GM12878 (cell line): ENCODE measurements at regions of chrX and their contacts with region 1.

Region 1: DNA sequence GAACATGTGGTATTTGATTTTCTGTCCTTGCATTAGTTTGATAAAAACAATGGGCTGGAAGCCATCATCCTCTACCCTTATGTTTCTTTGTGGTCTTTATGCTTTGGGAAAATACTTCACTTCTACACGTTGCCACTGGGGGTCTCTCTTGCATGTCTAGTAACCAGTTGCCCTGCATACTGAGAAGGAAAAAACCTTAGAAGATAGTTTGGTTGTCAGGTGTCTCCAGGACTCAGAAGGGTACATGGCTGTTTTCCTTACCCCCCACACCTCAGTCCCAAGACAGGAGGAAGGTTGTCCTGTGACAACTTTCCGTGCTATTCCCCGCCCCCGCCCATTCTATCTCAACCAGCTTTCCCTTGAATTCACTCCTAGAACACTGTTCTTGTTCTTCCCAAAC is 62.1 kb upstream of the LANCL3 start:
- DNase-seq: no peak
- ATAC-seq: peak; percentile 72
- H3K4me3 ChIP-seq: no peak overlapping the region
- H3K27ac ChIP-seq: no peak overlapping the region
- H3K4me1 ChIP-seq: no peaks in the 10 kb centered on the region
- H3K27me3 ChIP-seq: no peaks in the 10 kb centered on the region
- CTCF ChIP-seq: peak; percentile 17 to 37 (median 26); a peak in 2 of 6 replicates
- EP300 ChIP-seq: no peak
- POLR2A ChIP-seq: no peak
- RAD21 ChIP-seq: no peak

Region 2: DNA sequence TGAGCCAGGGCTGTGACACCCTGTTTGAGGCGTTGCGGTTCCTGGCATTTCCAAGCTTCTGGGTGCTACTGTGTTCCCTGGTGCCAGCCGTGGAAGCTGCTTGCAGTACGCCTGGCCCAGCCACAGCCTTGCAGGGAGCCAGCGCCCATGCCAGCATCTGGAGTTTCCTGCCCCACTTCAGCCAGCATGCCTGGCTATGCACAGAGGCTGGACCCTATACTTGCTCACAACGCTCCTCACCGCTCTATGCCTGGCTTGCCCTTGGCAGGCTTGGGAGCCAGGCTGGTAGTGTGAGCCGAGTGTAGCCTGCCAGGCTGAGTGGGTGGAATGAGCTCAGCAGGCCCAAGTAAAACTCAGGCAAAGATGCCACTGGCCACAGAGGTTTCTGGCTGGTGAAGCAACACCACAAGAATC is 137.8 kb before region 1 on chrX:
- CTCF ChIA-PET with region 1: no interaction called
- POLR2A ChIA-PET with region 1: no interaction called
- RAD21 ChIA-PET with region 1: no interaction called
- SMC1A ChIA-PET with region 1: no interaction called
- in situ Hi-C with region 1: no loop called
- intact Hi-C with region 1: no loop called
- DNase-seq: no peak
- ATAC-seq: no peak
- H3K4me3 ChIP-seq: no peak overlapping the region
- H3K27ac ChIP-seq: no peak overlapping the region
- H3K4me1 ChIP-seq: no peaks in the 10 kb centered on the region
- H3K27me3 ChIP-seq: no peaks in the 10 kb centered on the region
- CTCF ChIP-seq: no peak
- EP300 ChIP-seq: no peak
- POLR2A ChIP-seq: no peak
- RAD21 ChIP-seq: no peak

Region 3: DNA sequence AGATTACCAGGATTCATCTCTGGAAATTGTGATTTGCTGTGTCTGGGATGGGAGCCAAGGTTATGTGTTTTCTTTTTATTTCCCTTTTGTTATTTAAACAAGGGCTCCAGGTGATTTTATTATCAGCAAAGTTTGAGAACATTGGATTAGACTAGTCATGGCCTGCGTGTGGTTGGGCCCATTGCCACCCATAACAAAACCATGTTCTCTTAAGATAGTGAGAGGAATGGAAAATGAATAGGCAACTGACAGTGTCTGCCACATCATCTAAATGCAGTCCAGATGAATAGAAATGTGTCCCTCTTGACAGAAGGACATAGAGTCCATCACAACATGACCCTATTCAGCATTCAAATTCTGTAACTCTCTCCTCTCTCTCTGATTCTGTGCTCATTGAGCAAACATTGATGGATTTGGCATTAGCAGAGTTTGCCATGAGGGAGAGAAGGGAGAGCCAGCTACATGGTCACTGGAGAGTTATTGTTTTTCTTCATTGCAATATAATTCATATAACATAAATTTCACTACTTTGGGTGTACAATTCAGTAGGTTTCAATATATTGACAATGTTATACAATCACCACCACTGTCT is 187.9 kb after region 1 on chrX:
- CTCF ChIA-PET with region 1: no interaction called
- POLR2A ChIA-PET with region 1: no interaction called
- RAD21 ChIA-PET with region 1: no interaction called
- SMC1A ChIA-PET with region 1: no interaction called
- in situ Hi-C with region 1: no loop called
- intact Hi-C with region 1: loop called (anchors 10 kb)
- DNase-seq: no peak
- ATAC-seq: no peak
- H3K4me3 ChIP-seq: no peak overlapping the region
- H3K27ac ChIP-seq: no peak overlapping the region
- H3K4me1 ChIP-seq: no peaks in the 10 kb centered on the region
- H3K27me3 ChIP-seq: 0 out of 4 replicates have a peak, but pooled peaks cover 0 to 3% of the 10 kb centered on the region in 2 experiments
- CTCF ChIP-seq: no peak
- EP300 ChIP-seq: no peak
- POLR2A ChIP-seq: no peak
- RAD21 ChIP-seq: no peak